Lower leg skin (tissue), 4 donors: ENCODE measurements at regions of chr4 and their contacts with region 1.

Region 1: GRCh38 chr4:17846266-17846665 is 35.5 kb downstream of the NCAPG start:
- DNase-seq: no peak
- H3K4me3 ChIP-seq: no peak overlapping the region
- CTCF ChIP-seq: no peak
- POLR2A ChIP-seq: no peak

Region 2: DNA sequence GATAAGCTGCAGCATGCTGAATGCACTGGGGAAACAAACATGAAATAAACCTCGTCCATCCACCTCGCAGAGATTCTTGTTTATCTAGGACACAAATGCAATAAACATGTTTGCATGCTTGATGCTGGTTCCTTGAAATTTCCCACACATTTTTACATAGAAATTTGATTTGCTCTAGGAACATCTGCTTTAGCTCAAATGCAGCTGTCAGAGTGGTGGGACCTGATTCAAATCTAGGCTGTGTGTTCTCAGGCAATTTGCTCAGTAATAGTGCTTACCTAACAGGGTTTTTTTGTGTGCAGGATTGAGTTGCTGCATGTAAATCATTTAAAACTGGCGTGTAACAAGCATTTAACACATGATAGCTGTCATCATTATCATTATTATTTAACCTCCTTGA is 627.5 kb before region 1 on chr4:
- intact Hi-C with region 1: no loop called
- DNase-seq: no peak
- H3K4me3 ChIP-seq: no peak overlapping the region
- CTCF ChIP-seq: no peak
- POLR2A ChIP-seq: no peak

Region 3: GRCh38 chr4:17817020-17817419 is 29.2 kb before region 1 on chr4:
- intact Hi-C with region 1: loop called (anchors 1 kb)
- DNase-seq: no peak
- H3K4me3 ChIP-seq: no peak overlapping the region
- CTCF ChIP-seq: peak in 1 of 3 donors; percentile 34
- POLR2A ChIP-seq: no peak